ENCODE measurements at regions of chr6 and their contacts with region 1.

Region 1: DNA sequence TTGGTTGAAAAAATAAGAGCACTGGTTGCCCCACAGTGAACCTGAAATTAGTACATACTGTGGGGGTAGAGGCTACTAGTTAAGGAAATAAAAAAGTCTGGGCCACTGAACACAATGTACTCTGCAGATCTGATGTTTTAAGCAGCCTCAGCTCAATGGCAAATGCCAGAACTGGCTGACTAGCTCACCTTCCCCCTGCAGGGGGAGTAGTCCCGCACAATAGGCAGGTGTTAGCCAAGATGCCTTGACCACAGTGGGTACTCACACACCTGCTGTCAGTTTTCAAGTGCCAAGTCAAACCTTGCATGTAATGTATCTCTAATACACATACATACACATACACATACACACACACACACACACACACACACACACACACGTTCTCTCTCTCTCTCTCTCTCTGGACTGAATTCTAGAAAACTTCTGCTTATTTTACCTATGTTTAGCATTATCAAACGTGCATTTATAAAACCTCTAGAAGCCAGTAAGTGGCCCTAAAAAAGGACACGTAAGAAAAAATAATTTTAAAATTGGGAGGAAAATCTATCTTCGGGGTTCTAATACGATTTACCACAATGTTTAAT is 36.1 kb downstream of the GMDS start:
- DNase-seq: peak; percentile 39
- CTCF ChIP-seq: peak; percentile 70

Region 2: GRCh38 chr6:2103644-2104523 is 105.4 kb before region 1 on chr6:
- CTCF ChIA-PET with region 1: interaction called, 12 read pairs
- POLR2A ChIA-PET with region 1: no interaction called
- DNase-seq: peak; percentile 59
- CTCF ChIP-seq: peak; percentile 57

Region 3: GRCh38 chr6:2147766-2148448 is 61.4 kb before region 1 on chr6:
- CTCF ChIA-PET with region 1: no interaction called
- POLR2A ChIA-PET with region 1: no interaction called
- DNase-seq: no peak
- CTCF ChIP-seq: no peak

Region 4: DNA sequence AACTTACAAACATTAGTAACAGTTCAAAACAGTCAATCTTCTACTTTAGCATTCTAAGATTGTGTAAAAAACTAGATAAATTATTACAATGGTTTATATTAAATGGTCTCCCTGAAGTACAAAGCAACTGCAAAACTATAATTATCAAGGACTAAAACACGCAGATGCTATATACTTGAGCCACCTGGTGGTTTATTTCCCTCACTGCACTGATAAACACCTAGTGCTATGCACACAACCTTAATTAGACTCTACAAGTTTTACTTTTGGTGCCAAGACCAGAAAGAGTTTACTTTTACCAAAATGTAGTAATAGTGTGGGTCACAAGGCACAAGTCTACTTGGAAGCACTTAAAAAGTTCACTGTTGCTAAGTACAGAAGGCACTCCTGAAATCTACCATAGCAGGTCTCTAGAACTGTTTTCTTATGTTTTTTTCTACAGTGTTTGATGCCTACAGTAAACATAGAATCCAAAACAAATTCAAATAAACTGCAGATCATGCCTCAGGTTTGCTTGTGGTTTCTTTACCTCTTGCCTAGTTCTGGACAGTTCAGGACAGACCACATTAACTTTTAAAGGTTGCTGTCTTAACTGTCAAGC is 13.1 kb before region 1 on chr6:
- CTCF ChIA-PET with region 1: interaction called, 39 read pairs
- POLR2A ChIA-PET with region 1: no interaction called
- DNase-seq: peak; percentile 38
- CTCF ChIP-seq: peak; percentile 78

Region 5: DNA sequence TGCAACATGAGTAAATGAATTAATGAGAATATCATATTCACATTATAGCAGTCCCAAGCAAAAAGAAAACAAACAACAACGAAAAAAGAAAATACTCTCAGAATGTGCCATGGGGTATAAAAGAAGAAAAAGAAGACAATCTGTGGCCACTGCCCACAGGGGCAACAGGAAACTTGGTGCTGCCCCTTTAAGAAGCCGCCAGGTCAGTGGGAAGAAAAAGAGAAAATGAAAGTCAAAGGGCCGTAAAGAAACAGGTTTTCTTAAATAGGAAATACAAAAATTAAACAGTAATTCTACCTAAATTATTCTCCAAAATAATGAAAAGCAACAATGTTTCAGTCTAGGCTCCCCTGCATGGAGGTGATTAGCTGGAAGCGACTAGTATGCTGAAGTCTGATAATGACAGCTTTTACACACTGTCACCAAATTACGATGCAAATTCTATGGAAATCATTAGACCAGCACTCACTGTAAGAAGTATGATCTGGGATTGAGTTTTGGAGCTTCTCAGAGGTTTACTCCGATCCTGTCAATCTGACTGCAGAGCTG is 12.5 kb after region 1 on chr6:
- CTCF ChIA-PET with region 1: interaction called, 70 read pairs
- POLR2A ChIA-PET with region 1: no interaction called
- DNase-seq: peak; percentile 64
- CTCF ChIP-seq: no peak

Region 6: DNA sequence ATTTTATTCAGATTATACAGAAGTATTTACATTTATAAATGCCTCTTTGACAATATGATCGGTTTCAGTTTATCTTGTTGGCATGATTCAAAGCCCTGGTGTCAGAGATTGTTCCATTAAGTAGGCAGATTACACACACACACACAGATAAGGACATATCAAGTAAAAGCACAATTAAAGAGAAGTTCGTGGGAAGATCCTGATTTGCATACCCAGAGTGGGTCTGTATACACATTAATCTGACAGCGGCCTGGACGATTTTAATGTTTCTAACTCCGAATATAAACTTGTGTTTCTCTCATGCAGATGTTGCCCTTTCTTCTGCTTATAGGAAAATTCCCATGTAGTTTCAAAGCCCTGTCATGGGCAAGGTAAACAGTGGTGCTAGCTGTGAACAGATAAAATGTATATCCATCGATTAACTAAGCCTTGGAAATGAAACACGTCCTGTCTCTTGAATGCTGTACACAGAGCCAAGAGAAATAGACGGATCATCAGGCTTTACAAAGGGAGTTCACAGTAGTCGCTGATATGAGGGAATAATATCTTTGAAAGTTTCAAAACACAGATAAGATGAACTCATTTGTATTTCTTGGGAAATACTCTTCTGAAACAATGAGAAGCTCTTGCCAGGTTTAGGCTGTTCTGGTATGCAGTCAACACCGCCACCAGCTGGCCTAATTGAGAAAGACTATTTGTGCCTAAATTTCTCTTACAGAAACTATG is 144.3 kb after region 1 on chr6:
- CTCF ChIA-PET with region 1: interaction called, 69 read pairs
- POLR2A ChIA-PET with region 1: no interaction called
- DNase-seq: peak; percentile 57
- CTCF ChIP-seq: peak; percentile 67